MCF 10A (cell line): ENCODE measurements at regions of chr15 and their contacts with region 1.

Region 1: GRCh38 chr15:85172846-85173490 is 191.3 kb downstream of the PDE8A start:
- DNase-seq: peak; percentile 49
- H3K4me3 Mint-ChIP-seq: no peak overlapping the region
- H3K27ac Mint-ChIP-seq: no peak overlapping the region
- H3K4me1 Mint-ChIP-seq: peaks cover 18% of the 10 kb centered on the region
- H3K27me3 Mint-ChIP-seq: no peaks in the 10 kb centered on the region
- CTCF ChIP-seq: no peak

Region 2: GRCh38 chr15:85142312-85142711 is 30.7 kb before region 1 on chr15:
- CTCF ChIA-PET with region 1: no interaction called
- POLR2A ChIA-PET with region 1: no interaction called
- intact Hi-C with region 1: loop called (anchors 2 kb)
- DNase-seq: peak; percentile 73
- H3K4me3 Mint-ChIP-seq: no peak overlapping the region
- H3K27ac Mint-ChIP-seq: no peak overlapping the region
- H3K4me1 Mint-ChIP-seq: no peaks in the 10 kb centered on the region
- H3K27me3 Mint-ChIP-seq: no peaks in the 10 kb centered on the region
- CTCF ChIP-seq: no peak

Region 3: GRCh38 chr15:85473455-85473854 is 300.5 kb after region 1 on chr15:
- CTCF ChIA-PET with region 1: no interaction called
- POLR2A ChIA-PET with region 1: no interaction called
- intact Hi-C with region 1: no loop called
- DNase-seq: no peak
- H3K4me3 Mint-ChIP-seq: no peak overlapping the region
- H3K27ac Mint-ChIP-seq: no peak overlapping the region
- H3K4me1 Mint-ChIP-seq: peaks cover 41% of the 10 kb centered on the region
- H3K27me3 Mint-ChIP-seq: no peaks in the 10 kb centered on the region
- CTCF ChIP-seq: no peak